ENCODE measurements at regions of chr11 and their contacts with region 1.

Region 1: DNA sequence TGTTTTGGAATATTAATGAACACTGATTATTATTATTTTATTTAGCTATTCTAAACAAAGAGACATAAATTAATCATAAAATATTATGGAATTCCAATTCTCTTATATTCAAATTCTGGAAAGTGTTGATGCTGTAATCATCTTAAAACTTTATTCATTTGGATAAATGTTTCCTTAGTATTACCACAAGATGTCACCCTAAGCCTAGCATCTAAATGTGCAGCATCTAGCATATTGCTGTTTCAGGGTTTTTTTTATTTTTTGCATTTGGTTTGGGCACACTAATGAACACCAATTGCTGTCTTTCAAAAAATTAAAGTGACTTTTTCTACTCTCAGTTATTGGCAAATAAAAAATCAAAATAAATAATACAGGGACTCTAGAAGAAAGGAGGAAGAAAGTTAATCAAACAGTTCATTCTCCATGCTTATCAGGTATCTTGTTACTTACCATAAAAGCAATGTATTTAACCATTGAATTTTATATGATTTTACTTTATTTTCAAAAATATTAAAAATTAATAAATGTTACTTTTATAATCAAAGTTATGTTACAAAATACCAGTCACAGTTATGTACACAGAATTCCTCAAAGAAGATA is 31.8 kb downstream of the DLG2 start:
- DNase-seq: no peak
- H3K4me3 ChIP-seq: no peak overlapping the region
- H3K27ac ChIP-seq: no peak overlapping the region
- H3K4me1 ChIP-seq: no peaks in the 10 kb centered on the region
- H3K27me3 ChIP-seq: no peaks in the 10 kb centered on the region
- CTCF ChIP-seq: peak; percentile 53 to 62 (median 58)
- EP300 ChIP-seq: no peak
- POLR2A ChIP-seq: no peak

Region 2: DNA sequence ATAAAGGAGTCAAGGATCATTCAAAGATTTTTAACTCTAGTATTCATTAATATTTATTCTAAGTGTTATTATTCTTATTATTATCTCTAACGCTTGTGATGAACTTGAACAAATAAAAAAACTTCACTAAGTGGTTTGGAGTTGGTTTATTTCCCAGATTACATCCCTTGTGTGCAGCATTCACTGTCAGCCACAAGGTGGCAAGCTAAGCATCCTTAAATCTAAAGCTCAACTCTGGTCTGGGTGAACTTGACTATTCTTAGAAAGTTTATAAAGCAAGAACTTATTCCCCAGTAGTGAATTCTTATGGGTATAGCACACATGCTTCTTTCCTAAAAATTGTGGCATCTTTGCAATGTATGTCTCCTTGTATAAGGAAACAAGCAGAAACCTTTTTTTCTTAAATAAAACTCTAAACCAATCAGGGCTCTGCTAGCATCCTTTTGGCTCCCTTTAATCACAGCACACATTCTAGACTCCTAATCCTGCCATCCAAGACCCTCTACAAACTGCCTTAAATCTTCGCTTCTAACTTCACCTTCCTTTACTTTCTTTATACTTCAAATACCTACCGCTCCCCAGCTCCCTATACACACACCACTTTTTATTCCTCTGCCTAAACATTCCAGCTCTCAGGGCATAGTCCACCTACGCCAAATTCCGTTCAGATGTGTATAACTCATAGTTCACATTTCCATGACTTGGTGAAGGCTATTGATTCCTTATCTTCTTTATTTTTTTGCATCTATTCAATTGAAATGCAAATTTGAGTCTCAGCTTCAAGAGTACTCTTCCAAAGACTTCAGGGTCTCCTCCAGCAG is 1037.1 kb before region 1 on chr11:
- in situ Hi-C with region 1: loop called in 2 of 4 experiments (anchors 25 kb)
- intact Hi-C with region 1: no loop called
- DNase-seq: peak; percentile 31
- H3K4me3 ChIP-seq: no peak overlapping the region
- H3K27ac ChIP-seq: no peak overlapping the region
- H3K4me1 ChIP-seq: no peaks in the 10 kb centered on the region
- H3K27me3 ChIP-seq: no peaks in the 10 kb centered on the region
- CTCF ChIP-seq: peak; percentile 62 to 82 (median 77)
- EP300 ChIP-seq: no peak
- POLR2A ChIP-seq: no peak

Region 3: DNA sequence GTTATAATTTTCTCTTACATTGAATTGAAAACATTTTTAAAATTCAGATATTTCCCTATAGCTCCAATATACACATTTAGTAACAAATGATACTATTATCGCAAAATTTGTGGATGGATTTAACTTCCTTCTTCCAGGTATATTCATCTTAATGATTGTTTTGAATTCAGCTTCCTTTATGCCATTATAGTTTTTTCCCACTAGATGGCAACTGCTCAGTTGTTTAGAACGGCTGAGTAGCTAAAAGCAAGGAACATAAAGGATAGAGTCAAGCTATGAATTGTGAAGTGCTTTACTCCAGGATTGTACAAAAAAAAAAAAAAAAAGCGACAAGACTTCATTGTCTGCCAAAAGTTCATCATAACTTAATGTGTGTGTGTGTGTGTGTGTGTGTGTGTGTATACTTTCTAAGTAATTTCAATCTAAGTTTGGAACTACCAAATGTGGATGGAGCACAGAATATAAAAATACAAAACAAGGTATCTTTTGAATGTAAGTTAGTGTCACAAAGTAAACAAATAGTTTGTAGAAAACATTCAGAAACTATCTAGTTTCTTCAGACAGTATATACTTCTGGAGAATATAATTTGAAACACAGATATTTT is 814.6 kb before region 1 on chr11:
- in situ Hi-C with region 1: loop called in 2 of 4 experiments (anchors 25 kb)
- intact Hi-C with region 1: no loop called
- DNase-seq: no peak
- H3K4me3 ChIP-seq: no peak overlapping the region
- H3K27ac ChIP-seq: no peak overlapping the region
- H3K4me1 ChIP-seq: no peaks in the 10 kb centered on the region
- H3K27me3 ChIP-seq: no peaks in the 10 kb centered on the region
- CTCF ChIP-seq: peak; percentile 20 to 57 (median 42)
- EP300 ChIP-seq: no peak
- POLR2A ChIP-seq: no peak

Measured in transverse colon (tissue), 4 donors.